K562 (cell line): ENCODE measurements at regions of chr12 and their contacts with region 1.

Region 1: GRCh38 chr12:55073043-55074022 is 52.9 kb upstream of the OR9K2 start:
- DNase-seq: peak; percentile 64 to 79 (median 66)
- ATAC-seq: peak; percentile 85
- H3K4me3 ChIP-seq: no peak overlapping the region
- H3K27ac ChIP-seq: no peak overlapping the region
- H3K4me1 ChIP-seq: no peaks in the 10 kb centered on the region
- H3K27me3 ChIP-seq: no peaks in the 10 kb centered on the region; a peak in 1 of 5 replicates
- CTCF ChIP-seq: peak; percentile 80 to 92 (median 81)
- EP300 ChIP-seq: no peak
- POLR2A ChIP-seq: no peak
- RAD21 ChIP-seq: peak; percentile 92 to 95

Region 2: GRCh38 chr12:54749191-54749818 is 324.0 kb before region 1 on chr12:
- CTCF ChIA-PET with region 1: interaction called, 11 read pairs
- POLR2A ChIA-PET with region 1: no interaction called
- in situ Hi-C with region 1: loop called (anchors 10 kb)
- intact Hi-C with region 1: loop called (anchors 2 kb)
- DNase-seq: peak; percentile 31 to 61 (median 45)
- ATAC-seq: peak; percentile 75
- H3K4me3 ChIP-seq: no peak overlapping the region
- H3K27ac ChIP-seq: no peak overlapping the region
- H3K4me1 ChIP-seq: no peaks in the 10 kb centered on the region
- H3K27me3 ChIP-seq: no peaks in the 10 kb centered on the region
- CTCF ChIP-seq: peak; percentile 64 to 87 (median 74); a peak in 5 of 6 replicates
- EP300 ChIP-seq: no peak
- POLR2A ChIP-seq: no peak
- RAD21 ChIP-seq: peak; percentile 92 to 93

Region 3: GRCh38 chr12:54853995-54854566 is 219.3 kb before region 1 on chr12 and contains the start of gene MUCL1:
- CTCF ChIA-PET with region 1: interaction called, 15 read pairs
- POLR2A ChIA-PET with region 1: no interaction called
- in situ Hi-C with region 1: no loop called
- intact Hi-C with region 1: loop called (anchors 1 kb)
- DNase-seq: peak; percentile 69 to 79 (median 74)
- ATAC-seq: peak; percentile 99
- H3K4me3 ChIP-seq: no peak within 1 kb of the TSS
- H3K27ac ChIP-seq: no peak within 1 kb of the TSS
- H3K4me1 ChIP-seq: no peaks in the 10 kb centered on the region
- H3K27me3 ChIP-seq: no peaks in the 10 kb centered on the region; a peak in 1 of 5 replicates
- CTCF ChIP-seq: peak; percentile 76 to 91 (median 77)
- EP300 ChIP-seq: no peak
- POLR2A ChIP-seq: no peak
- RAD21 ChIP-seq: peak; percentile 96
- polyA plus RNA-seq, gene MUCL1: not detected

Region 4: DNA sequence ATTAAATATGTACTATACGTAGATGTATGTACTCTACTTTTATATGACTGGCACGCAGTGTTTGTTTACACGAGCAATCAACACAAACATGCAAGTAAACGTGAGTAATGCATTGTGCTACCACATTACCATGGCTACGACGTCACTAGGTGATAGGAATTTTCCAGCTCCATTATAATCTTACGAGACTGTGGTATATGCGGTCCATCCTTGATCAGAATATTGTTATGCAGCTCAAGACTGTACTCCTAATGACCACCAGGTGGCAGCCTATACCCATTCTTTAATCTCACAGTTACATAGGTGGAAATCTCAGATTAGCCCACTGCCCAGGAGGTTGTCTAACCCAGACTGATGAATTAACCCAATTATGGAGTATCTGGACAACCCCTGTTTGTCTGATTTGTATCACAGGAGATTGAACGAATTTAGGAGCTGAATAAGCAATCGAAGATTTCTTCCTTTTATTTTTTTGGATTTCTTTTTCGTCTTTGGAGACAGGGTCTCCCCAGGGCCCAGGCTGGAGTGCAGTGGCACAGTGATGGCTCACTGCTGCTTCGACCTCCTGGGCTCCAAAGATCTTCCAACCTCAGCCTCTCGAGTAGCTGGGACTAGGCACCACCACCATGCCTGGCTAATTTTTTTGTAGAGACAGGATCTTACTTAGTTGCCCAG is 80.0 kb before region 1 on chr12:
- CTCF ChIA-PET with region 1: interaction called, 97 read pairs
- POLR2A ChIA-PET with region 1: interaction called, 3 read pairs
- in situ Hi-C with region 1: no loop called
- intact Hi-C with region 1: loop called (anchors 1 kb)
- DNase-seq: peak; percentile 65 to 79 (median 68)
- ATAC-seq: peak; percentile 88
- H3K4me3 ChIP-seq: no peak overlapping the region
- H3K27ac ChIP-seq: no peak overlapping the region
- H3K4me1 ChIP-seq: peaks cover 3 to 20% of the 10 kb centered on the region in 2 experiments; a peak in 4 of 5 replicates
- H3K27me3 ChIP-seq: peaks cover 0 to 7% of the 10 kb centered on the region in 2 experiments; a peak in 1 of 5 replicates
- CTCF ChIP-seq: peak; percentile 81 to 90 (median 81)
- EP300 ChIP-seq: no peak
- POLR2A ChIP-seq: no peak
- RAD21 ChIP-seq: peak; percentile 94 to 96

Region 5: DNA sequence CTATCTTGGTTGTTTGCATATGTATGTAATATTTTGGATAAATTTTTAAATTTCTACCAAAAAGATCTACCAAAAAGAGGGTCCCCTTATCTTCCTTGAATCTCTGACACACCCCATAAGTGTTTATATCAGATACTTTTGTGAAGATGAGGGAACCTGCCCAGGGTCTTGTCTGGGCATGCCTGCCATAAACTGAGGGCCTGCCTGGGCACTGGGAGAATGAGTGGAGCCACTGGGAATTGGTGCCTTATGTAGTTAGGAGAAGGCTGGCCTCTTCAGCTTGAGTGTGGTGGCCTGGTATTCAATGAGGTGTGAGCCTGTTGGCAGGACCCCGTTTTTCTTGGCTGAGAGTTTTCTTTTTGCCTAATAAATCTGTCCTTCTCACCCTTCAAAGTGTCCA is 99.4 kb after region 1 on chr12:
- CTCF ChIA-PET with region 1: no interaction called
- POLR2A ChIA-PET with region 1: no interaction called
- in situ Hi-C with region 1: no loop called
- intact Hi-C with region 1: no loop called
- DNase-seq: no peak
- ATAC-seq: no peak
- H3K4me3 ChIP-seq: no peak overlapping the region
- H3K27ac ChIP-seq: no peak overlapping the region
- H3K4me1 ChIP-seq: no peaks in the 10 kb centered on the region
- H3K27me3 ChIP-seq: peaks cover 0 to 2% of the 10 kb centered on the region in 2 experiments; a peak in 1 of 5 replicates
- CTCF ChIP-seq: no peak
- EP300 ChIP-seq: no peak
- POLR2A ChIP-seq: no peak
- RAD21 ChIP-seq: no peak